HCT116 (cell line): ENCODE measurements at regions of chr9 and their contacts with region 1.

Region 1: DNA sequence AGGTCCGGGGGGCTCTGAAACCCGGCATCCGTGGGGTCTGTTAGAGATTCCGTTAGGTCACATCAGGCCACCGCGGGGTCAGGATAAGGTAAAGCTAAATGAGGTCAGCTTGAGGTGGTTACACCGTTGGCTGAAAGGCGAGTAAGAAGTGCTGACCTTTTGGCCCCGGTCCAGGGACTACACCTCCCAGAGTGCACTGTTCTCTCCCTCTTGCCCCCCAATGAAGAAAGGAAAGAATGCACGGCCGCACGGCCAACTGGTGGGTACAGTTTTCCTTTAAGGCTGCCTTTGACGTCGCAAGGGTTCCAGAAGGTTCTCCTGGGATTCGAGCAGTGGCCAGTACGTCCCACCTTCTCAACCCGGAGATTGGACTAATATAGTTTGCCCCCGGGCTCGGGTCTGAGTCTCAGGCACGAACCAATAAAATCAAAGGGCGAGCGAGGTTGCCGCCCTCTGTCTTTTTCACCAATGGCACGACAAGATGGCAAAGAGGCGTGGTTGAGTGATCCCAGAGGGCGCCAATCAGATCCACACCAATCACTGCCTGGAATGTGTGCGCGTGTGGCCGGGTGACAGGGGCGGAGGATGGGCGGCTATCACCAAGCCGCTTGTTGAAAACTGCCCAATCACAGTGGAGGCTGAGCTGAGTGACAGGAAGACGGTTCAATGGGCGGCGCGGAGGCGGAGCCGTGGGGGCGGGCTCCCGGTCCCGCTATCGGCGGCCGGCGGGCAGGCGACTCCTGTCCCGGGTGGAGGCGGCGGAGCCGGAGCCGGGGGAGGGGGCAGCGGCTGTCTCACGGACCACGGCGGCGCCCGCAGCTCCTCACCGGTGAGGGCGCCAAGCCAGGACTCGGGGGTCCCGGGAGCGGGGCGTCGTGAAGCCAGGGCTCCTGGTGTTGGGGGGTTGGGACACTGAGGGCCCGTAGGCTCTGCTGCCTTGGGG is at the start of gene DNAJB5:
- DNase-seq: peak; percentile 99
- ATAC-seq: peak; percentile 93
- H3K4me3 ChIP-seq: peak within 1 kb of the TSS; percentile 64 to 73
- H3K27ac ChIP-seq: no peak within 1 kb of the TSS; the same call in 1 of the 2 replicates
- H3K4me1 ChIP-seq: peaks cover 21 to 56% of the 10 kb centered on the region in 2 experiments
- H3K27me3 ChIP-seq: no peaks in the 10 kb centered on the region
- CTCF ChIP-seq: no peak
- POLR2A ChIP-seq: peak; percentile 24
- RAD21 ChIP-seq: no peak
- total RNA-seq, gene DNAJB5: 3.6 TPM

Region 2: DNA sequence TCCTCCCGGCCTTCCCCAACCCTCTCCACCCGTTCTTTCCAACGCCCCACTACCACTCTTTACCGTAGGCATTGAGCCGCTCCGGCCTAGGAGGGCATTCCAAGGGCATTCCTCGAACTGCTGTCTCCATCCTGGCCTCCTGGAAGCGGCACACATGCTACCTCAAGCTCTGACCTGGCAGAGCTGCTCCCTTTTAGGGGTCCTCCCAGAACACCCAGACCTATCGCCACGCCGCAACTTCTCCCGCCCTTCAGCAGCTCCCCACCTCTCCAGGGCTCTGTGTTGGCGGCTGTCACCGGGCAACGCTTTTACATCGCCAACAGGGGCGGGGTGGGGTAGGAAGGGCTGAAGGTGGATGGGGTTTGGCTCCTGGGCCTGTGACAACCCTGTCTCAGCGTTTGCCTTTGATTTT is 608.0 kb before region 1 on chr9:
- CTCF ChIA-PET with region 1: no interaction called
- POLR2A ChIA-PET with region 1: no interaction called
- RAD21 ChIA-PET with region 1: no interaction called
- intact Hi-C with region 1: no loop called
- DNase-seq: no peak
- ATAC-seq: no peak
- H3K4me3 ChIP-seq: peak overlapping the region in 1 of 2 experiments; percentile 42; a peak in 2 of 4 replicates
- H3K27ac ChIP-seq: no peak overlapping the region
- H3K4me1 ChIP-seq: peaks cover 16 to 34% of the 10 kb centered on the region in 2 experiments; a peak in 3 of 4 replicates
- H3K27me3 ChIP-seq: no peaks in the 10 kb centered on the region
- CTCF ChIP-seq: no peak
- POLR2A ChIP-seq: no peak
- RAD21 ChIP-seq: no peak

Region 3: DNA sequence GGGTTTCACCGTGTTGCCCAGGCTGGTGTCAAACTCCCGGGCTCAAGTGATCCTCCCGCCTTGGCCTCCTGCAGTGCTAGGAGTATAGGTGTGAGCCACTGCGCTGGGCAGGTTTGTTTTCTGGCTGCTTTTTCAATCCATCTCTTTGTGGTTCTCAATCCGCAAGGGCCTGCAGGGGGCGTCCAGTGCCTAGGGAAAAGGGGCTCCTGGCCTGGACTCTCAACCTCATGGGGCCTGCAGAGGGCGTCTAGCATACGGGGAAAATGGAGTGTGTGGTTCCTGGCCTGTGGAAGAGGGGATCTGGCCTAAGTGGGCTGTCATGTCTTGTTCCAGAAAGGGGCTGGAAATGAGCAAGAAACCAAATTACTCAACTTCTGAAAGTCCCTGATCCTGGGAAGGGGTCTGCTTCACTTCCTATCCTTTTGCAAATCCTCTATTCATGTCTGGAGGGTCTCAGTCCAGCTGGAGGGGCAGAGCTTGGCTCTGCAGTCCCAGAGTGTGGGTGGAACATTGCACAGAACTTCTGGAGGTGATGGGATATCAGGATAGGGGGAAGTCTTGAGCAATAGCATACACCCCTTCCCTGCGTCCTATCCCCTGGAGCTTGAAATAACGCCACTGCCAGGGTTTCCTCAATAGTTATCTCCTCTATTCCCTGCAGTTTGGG is 314.1 kb before region 1 on chr9:
- CTCF ChIA-PET with region 1: no interaction called
- POLR2A ChIA-PET with region 1: no interaction called
- RAD21 ChIA-PET with region 1: no interaction called
- intact Hi-C with region 1: loop called (anchors 10 kb)
- DNase-seq: peak; percentile 60
- ATAC-seq: peak; percentile 99
- H3K4me3 ChIP-seq: no peak overlapping the region
- H3K27ac ChIP-seq: no peak overlapping the region
- H3K4me1 ChIP-seq: no peaks in the 10 kb centered on the region
- H3K27me3 ChIP-seq: no peaks in the 10 kb centered on the region
- CTCF ChIP-seq: peak; percentile 93 to 99 (median 96)
- POLR2A ChIP-seq: no peak
- RAD21 ChIP-seq: peak; percentile 83

Region 4: DNA sequence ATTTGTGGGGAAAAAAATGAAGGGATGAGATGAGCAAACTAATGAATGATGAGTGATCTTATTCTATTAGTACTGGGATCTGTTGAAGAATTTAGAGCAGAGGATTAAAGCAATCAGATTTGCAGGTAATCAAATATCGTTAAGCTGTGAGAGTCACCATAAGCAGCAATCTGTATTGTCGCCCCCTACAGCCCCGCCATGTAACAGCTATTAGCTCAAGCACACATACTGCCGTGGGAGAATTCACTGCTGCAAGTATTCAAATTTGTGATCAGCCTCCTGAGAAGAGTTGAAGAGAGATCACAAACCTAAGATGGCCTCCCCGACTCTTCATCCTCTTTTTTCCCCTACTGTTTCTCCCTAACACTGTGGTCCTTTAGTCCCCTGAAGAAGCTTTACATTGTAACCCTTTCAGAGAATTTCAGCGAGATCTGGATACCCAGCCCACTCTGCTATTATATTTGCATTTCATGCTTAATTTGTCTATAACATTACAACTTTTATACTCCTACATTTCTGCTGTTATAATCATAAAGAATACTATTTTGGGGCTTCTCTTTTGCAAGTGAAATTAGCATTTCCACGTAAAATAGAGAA is 59.7 kb before region 1 on chr9:
- CTCF ChIA-PET with region 1: interaction called, 10 read pairs
- POLR2A ChIA-PET with region 1: no interaction called
- RAD21 ChIA-PET with region 1: no interaction called
- intact Hi-C with region 1: no loop called
- DNase-seq: peak; percentile 23
- ATAC-seq: peak; percentile 98
- H3K4me3 ChIP-seq: no peak overlapping the region
- H3K27ac ChIP-seq: no peak overlapping the region
- H3K4me1 ChIP-seq: no peaks in the 10 kb centered on the region
- H3K27me3 ChIP-seq: peaks cover 8% of the 10 kb centered on the region; the same call in 1 of the 2 replicates
- CTCF ChIP-seq: peak in 2 of 3 experiments; percentile 86 to 90; a peak in 4 of 6 replicates
- POLR2A ChIP-seq: no peak
- RAD21 ChIP-seq: 0 out of 2 replicates have a peak, but pooled peaks have one; percentile 17

Region 5: GRCh38 chr9:35035851-35036701 is 46.8 kb after region 1 on chr9:
- CTCF ChIA-PET with region 1: no interaction called
- POLR2A ChIA-PET with region 1: no interaction called
- RAD21 ChIA-PET with region 1: no interaction called
- intact Hi-C with region 1: no loop called
- DNase-seq: no peak
- ATAC-seq: no peak
- H3K4me3 ChIP-seq: no peak overlapping the region
- H3K27ac ChIP-seq: no peak overlapping the region
- H3K4me1 ChIP-seq: no peaks in the 10 kb centered on the region
- H3K27me3 ChIP-seq: no peaks in the 10 kb centered on the region
- CTCF ChIP-seq: no peak
- POLR2A ChIP-seq: no peak
- RAD21 ChIP-seq: no peak

Region 6: GRCh38 chr9:35470894-35471293 is 481.6 kb after region 1 on chr9:
- CTCF ChIA-PET with region 1: no interaction called
- POLR2A ChIA-PET with region 1: no interaction called
- RAD21 ChIA-PET with region 1: no interaction called
- intact Hi-C with region 1: loop called (anchors 10 kb)
- DNase-seq: no peak
- ATAC-seq: no peak
- H3K4me3 ChIP-seq: no peak overlapping the region
- H3K27ac ChIP-seq: no peak overlapping the region
- H3K4me1 ChIP-seq: no peaks in the 10 kb centered on the region
- H3K27me3 ChIP-seq: no peaks in the 10 kb centered on the region
- CTCF ChIP-seq: no peak
- POLR2A ChIP-seq: no peak
- RAD21 ChIP-seq: no peak

Region 7: DNA sequence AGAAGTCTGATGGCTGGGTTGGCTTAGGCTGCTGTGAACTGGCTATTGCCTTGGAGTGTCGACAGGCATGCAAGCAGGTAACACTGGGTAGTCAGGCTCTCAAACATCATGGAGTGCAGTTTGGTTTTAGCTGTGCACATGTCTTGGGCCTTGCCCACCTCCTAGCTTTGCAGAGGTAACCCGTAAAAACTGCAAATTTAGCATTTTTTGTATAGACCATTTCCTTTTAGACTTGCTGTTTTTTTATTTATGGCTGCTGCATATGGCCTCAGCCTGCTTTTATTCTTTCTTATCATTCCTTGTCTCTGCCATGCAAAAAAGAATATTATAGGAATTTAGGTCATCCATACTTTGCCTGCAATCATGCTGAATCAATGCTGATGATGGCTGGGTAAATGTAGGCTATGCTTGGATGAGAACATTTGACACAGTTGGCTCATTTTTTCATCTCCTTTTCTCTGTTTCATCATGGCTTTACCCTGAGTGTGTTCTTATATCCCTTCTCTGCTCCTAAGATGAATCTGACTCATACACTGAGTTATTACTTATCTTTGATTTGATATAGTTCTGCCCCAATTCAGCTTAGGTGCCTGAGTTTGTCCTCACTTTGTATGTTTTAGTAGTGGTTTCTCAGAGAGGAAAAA is 1074.7 kb after region 1 on chr9:
- CTCF ChIA-PET with region 1: no interaction called
- POLR2A ChIA-PET with region 1: no interaction called
- RAD21 ChIA-PET with region 1: no interaction called
- intact Hi-C with region 1: no loop called
- DNase-seq: no peak
- ATAC-seq: no peak
- H3K4me3 ChIP-seq: no peak overlapping the region
- H3K27ac ChIP-seq: no peak overlapping the region
- H3K4me1 ChIP-seq: no peaks in the 10 kb centered on the region
- H3K27me3 ChIP-seq: no peaks in the 10 kb centered on the region
- CTCF ChIP-seq: no peak
- POLR2A ChIP-seq: no peak
- RAD21 ChIP-seq: no peak